Activated CD4-positive, alpha-beta T cell treated with anti-CD3 and anti-CD28 coated beads, Interleukin-2, amount 10 ng/mL, durations not matched to agents 7 days and 5 days (primary cell): ENCODE measurements at regions of chr6 and their contacts with region 1.

Region 1: GRCh38 chr6:31597006-31597405 is 4.2 kb upstream of the NCR3 start:
- DNase-seq: peak; percentile 66
- H3K4me3 Mint-ChIP-seq: no peak overlapping the region
- H3K27ac Mint-ChIP-seq: peak overlapping the region; percentile 3
- H3K4me1 Mint-ChIP-seq: peaks cover 51% of the 10 kb centered on the region
- H3K27me3 Mint-ChIP-seq: no peaks in the 10 kb centered on the region

Region 2: GRCh38 chr6:31541658-31542521 is 55.1 kb before region 1 on chr6 and contains the start of gene DDX39B:
- CTCF ChIA-PET with region 1: interaction called, 497 read pairs
- POLR2A ChIA-PET with region 1: no interaction called
- DNase-seq: peak; percentile 96
- H3K4me3 Mint-ChIP-seq: peak within 1 kb of the TSS; percentile 98
- H3K27ac Mint-ChIP-seq: peak within 1 kb of the TSS; percentile 99
- H3K4me1 Mint-ChIP-seq: peaks cover 54% of the 10 kb centered on the region
- H3K27me3 Mint-ChIP-seq: no peaks in the 10 kb centered on the region
- total RNA-seq, gene DDX39B: 420 to 442 TPM

Region 3: DNA sequence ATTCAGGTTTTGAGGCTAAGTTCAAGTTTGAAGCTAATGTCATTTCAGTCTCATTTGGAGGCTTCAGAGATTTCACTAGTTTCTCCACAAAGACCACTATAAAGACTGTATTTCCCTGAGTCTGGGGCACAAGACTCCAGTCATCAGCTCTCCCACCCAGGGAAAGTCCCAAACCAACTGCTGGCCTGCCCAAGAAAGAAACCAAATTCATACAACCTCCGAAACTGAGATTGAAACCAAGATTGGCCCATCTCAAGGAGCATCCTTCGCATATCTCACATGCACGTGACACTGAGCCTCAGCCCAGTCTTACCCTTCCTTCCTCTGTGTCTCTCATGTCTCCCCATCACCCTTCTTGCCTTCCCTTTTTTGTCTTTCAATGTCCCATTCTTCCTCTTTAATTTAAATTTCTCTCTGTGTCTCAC is 28.5 kb before region 1 on chr6:
- CTCF ChIA-PET with region 1: interaction called, 576 read pairs
- POLR2A ChIA-PET with region 1: interaction called, 3 read pairs
- DNase-seq: peak; percentile 87
- H3K4me3 Mint-ChIP-seq: peak overlapping the region; percentile 3
- H3K27ac Mint-ChIP-seq: peak overlapping the region; percentile 75
- H3K4me1 Mint-ChIP-seq: peaks cover 74% of the 10 kb centered on the region
- H3K27me3 Mint-ChIP-seq: peaks cover 21% of the 10 kb centered on the region

Region 4: DNA sequence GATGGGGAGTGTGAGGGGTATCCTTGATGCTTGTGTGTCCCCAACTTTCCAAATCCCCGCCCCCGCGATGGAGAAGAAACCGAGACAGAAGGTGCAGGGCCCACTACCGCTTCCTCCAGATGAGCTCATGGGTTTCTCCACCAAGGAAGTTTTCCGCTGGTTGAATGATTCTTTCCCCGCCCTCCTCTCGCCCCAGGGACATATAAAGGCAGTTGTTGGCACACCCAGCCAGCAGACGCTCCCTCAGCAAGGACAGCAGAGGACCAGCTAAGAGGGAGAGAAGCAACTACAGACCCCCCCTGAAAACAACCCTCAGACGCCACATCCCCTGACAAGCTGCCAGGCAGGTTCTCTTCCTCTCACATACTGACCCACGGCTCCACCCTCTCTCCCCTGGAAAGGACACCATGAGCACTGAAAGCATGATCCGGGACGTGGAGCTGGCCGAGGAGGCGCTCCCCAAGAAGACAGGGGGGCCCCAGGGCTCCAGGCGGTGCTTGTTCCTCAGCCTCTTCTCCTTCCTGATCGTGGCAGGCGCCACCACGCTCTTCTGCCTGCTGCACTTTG is 21.6 kb before region 1 on chr6 and contains the start of gene TNF:
- CTCF ChIA-PET with region 1: interaction called, 576 read pairs
- POLR2A ChIA-PET with region 1: interaction called, 15 read pairs
- DNase-seq: peak; percentile 82
- H3K4me3 Mint-ChIP-seq: peak within 1 kb of the TSS; percentile 90
- H3K27ac Mint-ChIP-seq: peak within 1 kb of the TSS; percentile 88
- H3K4me1 Mint-ChIP-seq: peaks cover 90% of the 10 kb centered on the region
- H3K27me3 Mint-ChIP-seq: no peaks in the 10 kb centered on the region
- total RNA-seq, gene TNF: 46.5 to 47.1 TPM

Region 5: DNA sequence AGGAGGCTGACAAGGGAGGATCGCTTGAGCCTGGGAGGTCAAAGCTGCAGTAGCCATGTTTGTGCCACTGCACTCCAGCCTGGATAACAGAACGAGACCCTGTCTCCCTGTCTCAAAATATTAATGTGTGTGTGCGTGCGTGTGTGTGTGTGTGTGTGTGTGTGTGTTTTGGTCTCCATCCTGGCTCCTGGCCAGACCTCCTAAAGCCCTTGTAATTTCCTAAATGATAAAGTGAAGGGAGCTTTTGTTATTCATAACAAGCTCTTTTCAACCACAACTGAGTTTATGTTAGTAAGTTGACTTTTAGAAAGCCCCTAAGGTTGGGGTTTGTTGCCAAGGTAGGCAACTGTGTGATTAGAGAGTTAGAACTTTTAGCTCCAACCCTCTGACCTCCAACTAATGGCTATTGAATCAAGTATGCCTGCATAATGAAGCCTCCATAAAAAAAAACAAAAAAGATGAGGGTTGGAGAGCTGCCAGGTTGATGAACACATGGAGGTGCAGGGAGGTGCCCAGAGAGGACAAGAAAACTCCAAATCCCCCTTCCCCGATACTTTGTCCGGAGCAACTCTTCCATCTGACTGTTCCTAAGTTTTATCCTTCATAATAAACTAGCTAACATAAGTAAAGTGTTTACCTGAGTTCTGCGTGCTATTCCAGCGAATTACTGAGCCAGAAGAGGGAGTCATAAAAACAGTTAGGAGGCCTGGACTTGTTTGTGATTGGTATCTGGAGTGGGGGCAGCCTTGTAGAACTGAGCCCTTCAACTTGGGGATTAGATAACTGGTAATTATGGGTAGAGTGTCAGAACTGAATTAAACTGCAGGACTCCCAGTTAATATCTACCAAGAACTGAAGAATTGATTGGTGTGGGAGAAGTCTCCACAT is 12.8 kb after region 1 on chr6:
- CTCF ChIA-PET with region 1: interaction called, 51 read pairs
- POLR2A ChIA-PET with region 1: no interaction called
- DNase-seq: no peak
- H3K4me3 Mint-ChIP-seq: no peak overlapping the region
- H3K27ac Mint-ChIP-seq: no peak overlapping the region
- H3K4me1 Mint-ChIP-seq: peaks cover 10% of the 10 kb centered on the region
- H3K27me3 Mint-ChIP-seq: no peaks in the 10 kb centered on the region

Region 6: DNA sequence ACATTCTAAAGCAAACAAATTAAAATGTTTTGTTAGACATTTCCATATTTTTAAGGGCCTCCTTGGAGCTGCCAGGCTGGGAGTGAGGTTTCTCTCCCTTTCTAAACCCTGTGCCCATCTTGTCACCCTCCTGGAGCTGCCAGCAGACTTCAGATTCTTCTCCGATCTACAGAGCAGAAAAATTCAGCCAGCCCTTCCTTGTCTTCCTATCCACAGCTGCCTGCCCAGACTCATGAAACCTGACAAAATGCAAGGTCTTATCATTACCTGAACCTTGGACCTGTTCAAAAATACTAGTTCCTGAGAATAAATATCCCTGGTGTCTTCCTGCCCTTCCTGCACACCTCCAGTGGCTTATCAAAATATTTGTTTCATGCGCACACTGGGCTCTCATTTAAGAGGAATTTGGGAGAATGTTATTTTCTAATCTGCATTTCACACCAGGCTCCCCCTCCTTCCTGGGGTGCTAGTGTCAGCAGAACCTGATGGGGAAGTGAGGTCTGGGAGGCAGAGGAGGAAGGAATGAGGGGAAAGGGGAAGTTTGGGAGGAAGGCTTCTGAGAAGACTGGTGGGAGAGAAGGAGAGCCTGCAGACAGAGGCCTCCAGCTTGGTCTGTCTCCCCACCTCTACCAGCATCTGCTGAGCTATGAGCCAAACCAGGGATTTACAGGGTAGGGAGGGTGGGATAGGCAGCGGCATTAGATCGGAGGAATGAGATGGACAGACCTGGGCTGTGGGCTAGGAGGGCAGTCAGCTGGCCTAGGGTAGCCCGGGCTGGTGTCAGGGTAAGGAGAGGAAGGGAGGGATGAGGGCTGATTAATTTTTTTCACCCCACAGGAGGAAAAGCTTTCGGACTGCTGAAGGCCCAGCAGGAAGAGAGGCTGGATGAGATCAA is 17.9 kb after region 1 on chr6 and contains the start of gene AIF1:
- CTCF ChIA-PET with region 1: interaction called, 51 read pairs
- POLR2A ChIA-PET with region 1: no interaction called
- DNase-seq: no peak
- H3K4me3 Mint-ChIP-seq: peak within 1 kb of the TSS; percentile 71
- H3K27ac Mint-ChIP-seq: peak within 1 kb of the TSS; percentile 86
- H3K4me1 Mint-ChIP-seq: peaks cover 40% of the 10 kb centered on the region
- H3K27me3 Mint-ChIP-seq: no peaks in the 10 kb centered on the region
- total RNA-seq, gene AIF1: 48.0 to 54.2 TPM

Region 7: DNA sequence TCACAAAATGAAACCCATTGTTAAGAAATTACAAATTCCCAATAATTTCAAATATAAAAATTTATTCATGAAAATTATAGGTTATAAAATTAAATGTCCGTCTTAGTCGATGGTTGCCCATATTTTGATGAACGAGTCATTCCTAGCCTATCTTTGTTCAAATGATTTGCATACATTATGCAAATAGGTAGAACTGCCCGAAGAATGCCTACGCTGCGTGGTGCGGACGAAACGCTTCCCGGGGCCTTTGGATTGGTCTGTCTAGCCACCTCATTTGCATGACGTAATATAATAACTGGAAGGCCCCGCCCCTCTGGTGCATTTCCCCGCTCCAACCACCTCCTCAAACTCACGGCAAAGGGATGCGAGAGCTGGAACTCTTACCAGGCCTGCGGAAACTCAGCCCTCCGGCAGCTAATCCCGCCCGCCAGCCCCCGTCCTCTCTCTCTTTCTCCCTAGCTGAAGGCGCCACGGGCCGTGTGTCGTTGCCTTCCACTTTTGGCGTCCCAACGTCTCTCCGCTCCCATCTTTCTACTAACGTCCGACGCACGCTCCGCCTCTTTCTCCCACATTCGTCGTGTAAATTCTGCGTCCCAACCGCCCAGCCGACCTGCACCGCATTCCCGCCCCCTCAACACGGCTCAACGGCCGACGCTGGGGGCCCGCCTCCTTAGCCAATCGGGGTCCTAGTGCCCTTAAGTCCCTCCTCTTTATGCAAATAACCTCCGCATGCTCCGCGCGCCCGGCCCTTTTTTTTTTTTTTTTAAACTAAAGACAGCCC is 23.0 kb after region 1 on chr6:
- CTCF ChIA-PET with region 1: interaction called, 51 read pairs
- POLR2A ChIA-PET with region 1: no interaction called
- DNase-seq: peak; percentile 98
- H3K4me3 Mint-ChIP-seq: peak overlapping the region; percentile 86
- H3K27ac Mint-ChIP-seq: peak overlapping the region; percentile 95
- H3K4me1 Mint-ChIP-seq: peaks cover 51% of the 10 kb centered on the region
- H3K27me3 Mint-ChIP-seq: no peaks in the 10 kb centered on the region

Region 8: DNA sequence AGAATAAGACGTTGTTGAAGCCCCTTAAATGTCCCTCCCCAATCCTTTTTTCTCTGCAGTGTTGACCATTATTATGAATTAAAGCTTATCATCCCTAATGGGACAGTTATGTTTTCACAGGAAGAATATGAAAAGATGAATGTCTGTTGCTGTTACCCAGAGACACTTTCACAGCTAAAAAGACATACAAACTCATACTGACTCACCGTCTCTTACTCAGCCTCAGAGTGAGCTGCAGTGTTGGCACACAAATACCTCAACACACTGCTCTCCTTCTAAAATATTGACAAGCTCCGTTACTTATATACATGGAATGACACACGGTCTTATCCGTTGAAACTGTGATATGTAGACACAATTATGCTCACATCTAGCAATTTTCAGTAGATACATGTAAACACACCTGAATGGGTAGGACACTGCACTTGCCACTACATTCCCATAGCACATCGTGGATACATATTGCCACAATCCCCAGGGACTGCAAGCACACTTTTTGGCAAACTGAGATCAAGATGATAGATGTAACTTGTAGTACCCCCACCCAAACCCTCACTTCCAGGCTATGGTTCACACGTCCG is 155.8 kb after region 1 on chr6:
- CTCF ChIA-PET with region 1: no interaction called
- POLR2A ChIA-PET with region 1: no interaction called
- DNase-seq: no peak
- H3K4me3 Mint-ChIP-seq: no peak overlapping the region
- H3K27ac Mint-ChIP-seq: no peak overlapping the region
- H3K4me1 Mint-ChIP-seq: no peaks in the 10 kb centered on the region
- H3K27me3 Mint-ChIP-seq: no peaks in the 10 kb centered on the region